Common myeloid progenitor, CD34-positive (primary cell): ENCODE measurements at regions of chr6 and their contacts with region 1.

Region 1: GRCh38 chr6:158972241-158973233 is 27.5 kb downstream of the RSPH3 start:
- DNase-seq: peak; percentile 65 to 83 (median 79)
- H3K4me3 ChIP-seq: no peak overlapping the region
- H3K27ac ChIP-seq: no peak overlapping the region
- H3K4me1 ChIP-seq: no peaks in the 10 kb centered on the region
- H3K27me3 ChIP-seq: no peaks in the 10 kb centered on the region

Region 2: GRCh38 chr6:158704181-158704822 is 268.2 kb before region 1 on chr6:
- CTCF ChIA-PET with region 1: interaction called, 66 read pairs
- POLR2A ChIA-PET with region 1: no interaction called
- DNase-seq: peak; percentile 61 to 83 (median 76)
- H3K4me3 ChIP-seq: peak overlapping the region in 6 of 7 experiments; percentile 21 to 74 (median 47)
- H3K27ac ChIP-seq: no peak overlapping the region
- H3K4me1 ChIP-seq: peaks cover 0 to 7% (median 7%) of the 10 kb centered on the region in 4 experiments
- H3K27me3 ChIP-seq: no peaks in the 10 kb centered on the region

Region 3: DNA sequence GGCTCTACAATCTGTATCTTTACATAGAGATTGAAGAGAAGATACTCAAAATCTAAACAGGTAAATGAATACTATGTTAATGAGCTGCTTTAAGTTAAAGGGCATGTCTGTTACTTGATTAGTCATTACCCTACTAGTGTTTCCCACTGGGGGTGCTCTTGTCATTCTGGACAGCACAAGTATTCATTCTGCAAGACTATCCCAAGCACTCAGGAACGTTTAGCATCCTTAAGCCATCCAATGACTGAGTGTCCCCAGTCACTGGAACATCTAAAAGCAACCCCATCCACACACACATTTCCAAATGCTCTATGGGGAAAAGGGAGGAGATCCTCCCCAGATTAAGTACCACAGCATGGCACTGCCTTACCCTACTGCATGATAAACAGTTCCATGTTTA is 179.1 kb before region 1 on chr6:
- CTCF ChIA-PET with region 1: interaction called, 17 read pairs
- POLR2A ChIA-PET with region 1: no interaction called
- DNase-seq: peak; percentile 50 to 72 (median 70)
- H3K4me3 ChIP-seq: no peak overlapping the region
- H3K27ac ChIP-seq: no peak overlapping the region
- H3K4me1 ChIP-seq: peaks cover 8 to 17% (median 12%) of the 10 kb centered on the region in 4 experiments
- H3K27me3 ChIP-seq: no peaks in the 10 kb centered on the region

Region 4: GRCh38 chr6:158910484-158911348 is 61.8 kb before region 1 on chr6:
- CTCF ChIA-PET with region 1: no interaction called
- POLR2A ChIA-PET with region 1: no interaction called
- DNase-seq: peak in 2 of 3 donors; percentile 13 to 17
- H3K4me3 ChIP-seq: peak overlapping the region in 2 of 7 experiments; percentile 19 to 39
- H3K27ac ChIP-seq: peak overlapping the region in 1 of 2 experiments; percentile 20
- H3K4me1 ChIP-seq: peaks cover 12 to 23% (median 15%) of the 10 kb centered on the region in 4 experiments
- H3K27me3 ChIP-seq: no peaks in the 10 kb centered on the region

Region 5: GRCh38 chr6:158962371-158962770 is 10.2 kb before region 1 on chr6:
- CTCF ChIA-PET with region 1: interaction called, 25 read pairs
- POLR2A ChIA-PET with region 1: no interaction called
- DNase-seq: no peak
- H3K4me3 ChIP-seq: no peak overlapping the region
- H3K27ac ChIP-seq: no peak overlapping the region
- H3K4me1 ChIP-seq: no peaks in the 10 kb centered on the region
- H3K27me3 ChIP-seq: no peaks in the 10 kb centered on the region

Region 6: DNA sequence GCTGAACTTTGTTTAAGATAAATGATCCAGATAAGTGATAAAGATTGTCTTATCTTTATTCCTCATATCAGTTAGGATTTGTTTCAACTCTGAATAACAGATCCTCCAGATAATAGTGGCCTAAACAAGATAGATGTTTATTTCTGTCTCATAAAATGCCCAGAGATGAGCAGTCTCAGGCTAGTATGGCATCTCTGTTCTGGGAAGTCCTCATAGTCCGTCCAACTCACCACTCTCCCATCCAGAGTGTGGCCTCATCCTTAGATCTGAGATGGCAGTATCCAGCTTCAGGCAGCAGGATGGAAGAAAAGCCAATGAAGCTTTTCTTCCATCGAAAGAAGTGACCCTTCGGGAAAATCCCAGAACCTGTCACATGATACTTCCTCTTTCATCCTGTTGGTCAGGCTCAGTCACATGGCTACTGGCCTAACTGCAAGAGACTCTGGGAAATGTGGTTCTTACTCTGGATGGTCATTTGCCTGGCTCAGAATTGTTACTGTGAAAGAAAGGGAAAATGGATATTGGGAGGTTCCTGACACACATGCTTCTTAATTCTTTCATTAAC is 101.7 kb after region 1 on chr6:
- CTCF ChIA-PET with region 1: no interaction called
- POLR2A ChIA-PET with region 1: no interaction called
- DNase-seq: no peak
- H3K4me3 ChIP-seq: no peak overlapping the region
- H3K27ac ChIP-seq: no peak overlapping the region
- H3K4me1 ChIP-seq: peaks cover under 1 to 12% (median 6%) of the 10 kb centered on the region in 4 experiments
- H3K27me3 ChIP-seq: no peaks in the 10 kb centered on the region